ENCODE measurements at regions of chr10 and their contacts with region 1.

Region 1: DNA sequence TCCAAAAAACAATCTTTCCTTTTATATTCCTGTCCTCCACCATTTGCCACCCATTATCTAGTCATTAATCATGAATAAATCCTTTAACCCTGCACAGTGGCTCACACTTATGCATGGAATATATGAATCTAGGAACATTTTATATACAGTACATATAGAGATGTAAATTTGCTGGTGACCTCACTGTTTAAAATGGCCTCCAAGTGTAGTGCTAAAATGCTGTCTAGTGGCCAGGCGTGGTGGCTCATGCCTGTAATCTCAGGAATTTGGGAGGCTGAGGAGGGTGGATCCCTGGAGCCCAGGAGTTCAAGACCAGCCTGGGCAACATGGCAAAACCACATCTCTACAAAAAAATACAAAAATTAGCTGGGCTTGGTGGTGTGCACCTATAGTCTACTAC is 9.6 kb downstream of the NANOS1 start:
- DNase-seq: no peak
- H3K4me3 Mint-ChIP-seq: no peak overlapping the region
- H3K27ac Mint-ChIP-seq: peak overlapping the region; percentile 46
- H3K4me1 Mint-ChIP-seq: peaks cover 15% of the 10 kb centered on the region
- H3K27me3 Mint-ChIP-seq: no peaks in the 10 kb centered on the region

Region 2: GRCh38 chr10:118234683-118235082 is 804.5 kb before region 1 on chr10:
- CTCF ChIA-PET with region 1: no interaction called
- POLR2A ChIA-PET with region 1: no interaction called
- intact Hi-C with region 1: no loop called
- DNase-seq: no peak
- H3K4me3 Mint-ChIP-seq: no peak overlapping the region
- H3K27ac Mint-ChIP-seq: no peak overlapping the region
- H3K4me1 Mint-ChIP-seq: no peaks in the 10 kb centered on the region
- H3K27me3 Mint-ChIP-seq: peaks cover 13% of the 10 kb centered on the region

Region 3: GRCh38 chr10:118908557-118909256 is 130.5 kb before region 1 on chr10:
- CTCF ChIA-PET with region 1: no interaction called
- POLR2A ChIA-PET with region 1: no interaction called
- intact Hi-C with region 1: no loop called
- DNase-seq: no peak
- H3K4me3 Mint-ChIP-seq: no peak overlapping the region
- H3K27ac Mint-ChIP-seq: no peak overlapping the region
- H3K4me1 Mint-ChIP-seq: no peaks in the 10 kb centered on the region
- H3K27me3 Mint-ChIP-seq: peaks cover 8% of the 10 kb centered on the region

Region 4: DNA sequence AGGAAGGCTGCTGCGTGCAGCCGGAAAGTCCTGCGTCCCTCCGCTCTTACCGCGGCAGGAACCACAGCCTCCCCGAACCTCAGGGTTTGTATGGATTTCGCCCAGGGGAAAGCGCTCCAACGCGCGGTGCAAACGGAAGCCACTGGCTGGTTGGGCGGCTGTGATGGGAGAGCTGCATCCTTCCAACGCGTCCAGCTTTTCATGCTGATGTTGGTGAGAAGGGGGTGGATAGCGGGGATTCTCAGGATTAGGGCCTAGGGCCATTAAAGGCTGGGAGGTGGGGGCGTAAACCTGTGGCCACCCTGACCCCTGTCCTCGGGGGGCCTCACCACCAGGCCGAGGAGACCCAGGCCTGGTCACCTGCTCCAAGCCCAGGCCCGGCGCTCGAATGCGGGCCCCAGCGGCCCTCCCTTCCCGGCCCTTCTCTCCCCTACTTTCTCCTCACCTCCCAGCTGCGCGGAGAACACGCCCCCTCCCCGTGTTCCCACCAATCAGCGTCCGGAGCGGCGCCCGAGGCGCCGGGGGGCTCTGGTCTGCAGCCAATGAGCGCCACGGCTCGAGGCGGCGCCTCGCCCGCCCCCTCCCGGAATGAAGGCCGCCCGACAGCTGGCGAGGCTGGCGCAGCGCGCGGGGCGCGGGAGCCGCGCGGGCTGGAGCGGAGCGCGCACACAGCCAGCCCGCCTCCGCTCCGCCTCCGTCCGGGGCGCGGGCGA is 10.1 kb before region 1 on chr10:
- CTCF ChIA-PET with region 1: interaction called, 4 read pairs
- POLR2A ChIA-PET with region 1: no interaction called
- intact Hi-C with region 1: loop called (anchors 1 kb)
- DNase-seq: peak; percentile 84
- H3K4me3 Mint-ChIP-seq: peak overlapping the region; percentile 48
- H3K27ac Mint-ChIP-seq: no peak overlapping the region
- H3K4me1 Mint-ChIP-seq: peaks cover 15% of the 10 kb centered on the region
- H3K27me3 Mint-ChIP-seq: no peaks in the 10 kb centered on the region

Region 5: DNA sequence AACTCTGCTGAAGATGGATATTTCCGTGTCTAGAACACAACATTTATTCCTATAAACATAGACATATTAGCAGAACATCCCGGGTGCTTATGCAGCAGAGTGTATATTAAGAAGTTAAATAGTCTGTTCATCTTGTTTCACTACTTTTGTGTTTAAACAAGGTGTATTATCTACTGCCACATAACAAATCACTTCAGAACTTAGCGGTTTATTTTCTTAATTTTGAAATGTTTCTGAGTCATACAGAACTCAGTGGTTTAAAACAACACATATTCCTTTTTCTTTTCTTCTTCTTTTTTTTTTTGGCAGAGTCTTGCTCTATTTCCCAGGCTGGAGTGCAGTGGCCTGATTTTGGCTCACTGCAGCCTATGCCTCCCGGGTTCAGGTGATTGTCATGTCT is 90.6 kb after region 1 on chr10:
- CTCF ChIA-PET with region 1: no interaction called
- POLR2A ChIA-PET with region 1: no interaction called
- intact Hi-C with region 1: no loop called
- DNase-seq: no peak
- H3K4me3 Mint-ChIP-seq: no peak overlapping the region
- H3K27ac Mint-ChIP-seq: peak overlapping the region; percentile 13
- H3K4me1 Mint-ChIP-seq: peaks cover 52% of the 10 kb centered on the region
- H3K27me3 Mint-ChIP-seq: no peaks in the 10 kb centered on the region